Activated CD8-positive, alpha-beta T cell treated with anti-CD3 and anti-CD28 coated beads, Interleukin-2, amount 10 ng/mL, durations not matched to agents 7 days and 5 days (primary cell): ENCODE measurements at regions of chr10 and their contacts with region 1.

Region 1: DNA sequence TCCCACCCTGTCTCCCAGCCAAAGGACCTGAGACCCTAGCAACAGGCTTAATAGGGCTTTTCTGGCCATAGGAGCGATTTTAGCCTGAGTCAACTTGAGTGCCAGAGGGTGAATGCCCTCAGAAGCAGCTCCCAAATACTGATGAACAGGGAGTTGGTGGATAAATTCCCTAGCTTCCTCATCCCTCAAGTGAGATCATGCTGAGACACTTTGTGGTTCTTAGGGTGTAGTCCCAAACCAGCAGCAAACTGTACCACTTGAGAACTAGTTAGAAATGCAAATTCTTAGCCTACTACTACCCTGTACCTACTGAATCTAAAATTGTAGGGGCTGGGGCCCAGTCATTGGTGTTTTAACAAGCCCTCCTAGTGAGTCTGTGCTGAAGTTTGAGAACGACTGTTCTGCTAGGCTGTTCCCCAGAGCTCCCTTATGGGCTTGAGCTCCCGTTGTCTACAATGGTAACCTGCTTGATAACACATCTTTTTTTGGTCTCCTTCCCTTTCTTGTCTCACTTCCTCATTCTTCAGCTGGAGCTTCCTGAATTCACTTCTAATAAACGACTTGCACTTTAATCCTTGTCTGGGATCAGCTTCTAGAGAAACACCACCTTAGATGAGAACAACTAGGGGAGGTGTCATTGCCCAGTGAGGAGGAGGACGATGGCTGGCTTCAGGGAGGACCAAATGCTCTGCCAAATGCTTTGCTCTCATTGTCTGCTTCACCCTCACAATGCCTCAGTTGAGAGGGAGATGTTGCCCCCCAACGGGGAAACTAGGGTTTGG is 18.2 kb upstream of the CDH23 start:
- DNase-seq: no peak
- ATAC-seq: no peak
- H3K4me3 Mint-ChIP-seq: no peak overlapping the region
- H3K27ac Mint-ChIP-seq: no peak overlapping the region
- H3K4me1 Mint-ChIP-seq: peaks cover 18% of the 10 kb centered on the region
- H3K27me3 Mint-ChIP-seq: peaks cover 2% of the 10 kb centered on the region

Region 2: GRCh38 chr10:71319042-71319799 is 59.3 kb before region 1 on chr10 and contains the start of gene SLC29A3:
- CTCF ChIA-PET with region 1: interaction called, 11 read pairs
- POLR2A ChIA-PET with region 1: interaction called, 4 read pairs
- DNase-seq: peak; percentile 90
- ATAC-seq: peak; percentile 96
- H3K4me3 Mint-ChIP-seq: peak within 1 kb of the TSS; percentile 88
- H3K27ac Mint-ChIP-seq: peak within 1 kb of the TSS; percentile 75
- H3K4me1 Mint-ChIP-seq: peaks cover 37% of the 10 kb centered on the region
- H3K27me3 Mint-ChIP-seq: peaks cover 3% of the 10 kb centered on the region
- total RNA-seq, gene SLC29A3: 3.0 to 3.4 TPM

Region 3: DNA sequence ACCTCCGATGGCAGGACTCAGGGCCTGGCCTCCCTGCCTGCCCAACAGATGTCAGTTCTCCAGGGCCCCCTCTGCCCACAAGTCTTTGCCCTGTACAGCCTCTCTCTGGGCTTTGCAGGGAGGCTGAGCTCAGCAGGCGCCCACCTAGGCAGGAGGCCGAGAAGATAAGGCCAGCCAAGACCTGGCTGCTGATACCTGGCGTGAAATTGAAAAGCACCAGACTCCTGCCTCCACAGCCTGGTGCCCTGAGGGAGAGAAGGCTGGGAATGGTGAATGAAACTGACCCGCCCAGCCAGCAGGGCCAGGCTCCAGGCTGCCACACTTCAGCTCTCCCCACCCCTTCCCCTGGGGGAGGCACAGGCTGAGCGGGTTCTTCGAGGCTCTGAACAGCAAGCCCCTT is 164.0 kb after region 1 on chr10:
- CTCF ChIA-PET with region 1: no interaction called
- POLR2A ChIA-PET with region 1: no interaction called
- DNase-seq: no peak
- ATAC-seq: no peak
- H3K4me3 Mint-ChIP-seq: no peak overlapping the region
- H3K27ac Mint-ChIP-seq: no peak overlapping the region
- H3K4me1 Mint-ChIP-seq: no peaks in the 10 kb centered on the region
- H3K27me3 Mint-ChIP-seq: no peaks in the 10 kb centered on the region